Upper lobe of right lung (tissue), 1 donor: ENCODE measurements at regions of chr1 and their contacts with region 1.

Region 1: GRCh38 chr1:65958561-65959350 is 166.1 kb downstream of the PDE4B start:
- DNase-seq: peak; percentile 59
- ATAC-seq: peak; percentile 72
- H3K4me3 ChIP-seq: no peak overlapping the region
- H3K27ac ChIP-seq: no peak overlapping the region
- H3K4me1 ChIP-seq: no peaks in the 10 kb centered on the region
- H3K27me3 ChIP-seq: no peaks in the 10 kb centered on the region
- CTCF ChIP-seq: peak; percentile 70

Region 2: DNA sequence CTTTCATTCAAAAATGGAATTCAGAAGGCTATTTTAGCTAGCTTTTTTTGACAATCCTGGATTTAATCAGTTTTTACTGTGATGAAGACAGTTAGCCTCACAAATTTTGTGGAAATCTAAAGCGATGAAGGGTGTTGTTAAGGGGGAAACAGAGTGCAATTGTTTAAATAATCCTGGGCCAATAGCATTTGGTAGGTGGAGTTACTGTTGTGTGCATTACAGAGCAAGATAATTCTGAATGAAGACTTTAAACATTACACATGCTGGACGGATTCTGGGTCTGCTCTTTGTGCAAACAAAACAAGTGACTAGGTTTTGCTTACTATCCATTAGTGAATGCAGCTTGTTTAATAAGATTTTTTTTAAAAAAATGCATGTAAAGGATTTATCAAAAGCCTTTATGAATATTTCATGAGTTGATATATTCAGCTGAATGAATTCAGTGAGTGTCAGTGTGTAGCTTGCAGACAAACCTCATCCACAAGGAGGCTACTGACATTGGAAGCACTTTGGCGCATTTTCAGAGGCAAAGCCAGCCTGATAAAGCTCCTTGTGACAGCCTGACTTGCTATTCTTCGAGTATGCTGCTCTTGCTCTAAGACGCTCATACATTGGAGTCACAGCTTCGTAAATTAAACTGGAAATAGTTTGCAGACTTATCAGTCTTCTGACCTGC is 33.5 kb after region 1 on chr1:
- intact Hi-C with region 1: no loop called
- DNase-seq: no peak
- ATAC-seq: no peak
- H3K4me3 ChIP-seq: no peak overlapping the region
- H3K27ac ChIP-seq: no peak overlapping the region
- H3K4me1 ChIP-seq: no peaks in the 10 kb centered on the region
- H3K27me3 ChIP-seq: no peaks in the 10 kb centered on the region
- CTCF ChIP-seq: no peak

Region 3: GRCh38 chr1:66048011-66048410 is 89.3 kb after region 1 on chr1:
- intact Hi-C with region 1: no loop called
- DNase-seq: no peak
- ATAC-seq: no peak
- H3K4me3 ChIP-seq: no peak overlapping the region
- H3K27ac ChIP-seq: no peak overlapping the region
- H3K4me1 ChIP-seq: no peaks in the 10 kb centered on the region
- H3K27me3 ChIP-seq: no peaks in the 10 kb centered on the region
- CTCF ChIP-seq: no peak

Region 4: DNA sequence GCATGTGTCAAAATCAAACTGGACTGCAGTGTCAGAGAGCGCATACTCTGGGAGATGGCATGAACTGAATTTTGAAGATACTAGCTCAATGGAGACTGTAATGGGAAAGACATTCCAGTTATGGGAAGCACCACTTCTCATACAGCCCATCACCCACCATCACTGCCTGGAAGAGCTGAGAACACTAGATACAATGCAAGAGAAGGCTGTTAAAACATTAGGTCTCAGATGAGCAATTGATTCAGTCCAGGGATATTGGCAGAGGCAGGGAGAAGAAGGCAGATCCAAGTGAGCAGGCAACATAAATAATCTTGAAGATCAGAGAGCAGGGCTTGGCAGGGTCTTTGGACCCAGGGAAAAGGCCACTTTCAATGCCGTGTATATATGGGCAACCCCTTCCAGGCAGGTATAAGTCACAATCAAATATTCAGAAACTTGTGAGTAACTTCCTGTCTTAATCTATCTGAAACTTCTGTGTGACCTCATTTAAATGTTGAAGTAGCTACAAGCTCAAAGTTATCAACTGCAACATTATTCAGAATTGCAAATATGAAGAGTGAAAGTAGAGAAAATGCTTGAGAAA is 284.9 kb after region 1 on chr1:
- intact Hi-C with region 1: loop called (anchors 2 kb)
- DNase-seq: no peak
- ATAC-seq: no peak
- H3K4me3 ChIP-seq: no peak overlapping the region
- H3K27ac ChIP-seq: no peak overlapping the region
- H3K4me1 ChIP-seq: no peaks in the 10 kb centered on the region
- H3K27me3 ChIP-seq: no peaks in the 10 kb centered on the region
- CTCF ChIP-seq: no peak

Region 5: GRCh38 chr1:66436378-66437145 is 477.8 kb after region 1 on chr1:
- intact Hi-C with region 1: loop called (anchors 10 kb)
- DNase-seq: no peak
- ATAC-seq: peak; percentile 32
- H3K4me3 ChIP-seq: no peak overlapping the region
- H3K27ac ChIP-seq: no peak overlapping the region
- H3K4me1 ChIP-seq: no peaks in the 10 kb centered on the region
- H3K27me3 ChIP-seq: no peaks in the 10 kb centered on the region
- CTCF ChIP-seq: peak; percentile 22